AG04449 (cell line): ENCODE measurements at regions of chr13 and their contacts with region 1.

Region 1: DNA sequence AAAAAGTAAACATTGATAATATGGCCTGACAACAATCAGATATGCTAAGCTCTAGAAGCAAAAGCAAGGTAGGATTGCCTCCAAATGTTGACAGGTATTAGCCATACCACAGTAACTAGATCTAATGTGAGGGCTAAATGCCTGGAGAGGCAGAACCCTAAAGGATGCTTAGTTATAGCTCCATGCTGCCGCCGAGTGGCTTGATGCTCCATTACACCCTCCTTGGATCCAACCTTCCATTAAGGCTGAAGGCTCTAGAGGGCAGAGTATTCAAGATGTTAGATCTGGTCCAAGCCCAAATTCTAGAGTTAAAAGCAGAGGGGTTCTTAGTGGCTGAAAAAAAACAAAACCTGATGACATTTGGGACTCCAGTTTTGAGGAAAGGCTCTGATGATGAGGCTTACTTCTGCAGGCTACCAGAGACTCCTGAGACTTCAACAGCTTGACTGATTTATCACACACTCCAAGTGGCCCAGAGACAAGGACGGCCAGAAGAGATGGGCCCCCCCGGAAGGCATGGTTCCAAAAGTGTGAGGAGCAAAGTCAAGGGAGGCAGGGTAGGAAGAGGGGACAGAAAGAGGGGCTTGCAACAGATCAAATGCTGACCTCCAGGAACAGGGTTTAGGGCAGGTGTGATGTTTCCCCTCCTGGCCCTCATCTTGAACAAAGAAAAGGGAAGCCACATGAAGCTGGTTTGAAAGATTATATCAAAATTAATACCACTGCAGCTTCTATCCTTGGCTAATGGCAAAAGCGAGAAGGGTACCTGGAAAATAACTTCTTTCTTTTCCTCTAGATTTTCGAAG is 21.9 kb upstream of the CPB2 start:
- DNase-seq: peak; percentile 23
- H3K4me3 ChIP-seq: no peak overlapping the region
- CTCF ChIP-seq: peak; percentile 91

Region 2: GRCh38 chr13:45807520-45808099 is 319.1 kb before region 1 on chr13:
- CTCF ChIA-PET with region 1: interaction called, 76 read pairs
- POLR2A ChIA-PET with region 1: no interaction called
- DNase-seq: no peak
- H3K4me3 ChIP-seq: no peak overlapping the region
- CTCF ChIP-seq: peak; percentile 38

Region 3: DNA sequence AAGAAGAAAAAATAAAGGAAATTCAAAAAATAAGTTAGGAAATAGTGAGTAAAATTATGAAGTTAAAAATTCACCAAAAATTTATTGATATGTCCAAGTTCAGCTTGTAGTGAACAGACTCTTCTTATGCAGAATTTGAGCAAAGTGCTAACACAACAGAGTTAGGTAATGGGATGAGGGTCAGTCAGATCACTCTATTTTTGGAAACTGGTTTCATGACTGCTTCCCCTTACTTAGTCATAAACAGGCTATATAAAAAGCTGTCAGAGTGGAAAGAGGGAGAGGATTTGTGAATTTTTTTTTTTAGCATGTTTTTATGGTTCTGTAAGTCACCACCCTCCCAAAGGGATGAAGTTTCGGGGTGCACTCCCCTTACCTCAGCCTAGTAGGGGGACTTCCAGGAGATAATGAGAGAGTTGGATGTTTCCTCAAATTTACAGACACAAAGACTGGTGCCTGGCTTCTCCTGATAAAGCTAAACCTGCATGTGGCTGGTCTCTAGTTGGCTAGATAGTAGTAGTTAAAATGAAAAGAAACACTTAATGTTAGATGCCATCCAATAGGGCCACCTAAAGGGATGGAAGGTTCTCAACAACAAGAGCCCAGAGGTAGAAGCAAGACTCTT is 26.5 kb before region 1 on chr13:
- CTCF ChIA-PET with region 1: interaction called, 10 read pairs
- POLR2A ChIA-PET with region 1: no interaction called
- DNase-seq: no peak
- H3K4me3 ChIP-seq: no peak overlapping the region
- CTCF ChIP-seq: no peak

Region 4: GRCh38 chr13:46143184-46143701 is 16.5 kb after region 1 on chr13:
- CTCF ChIA-PET with region 1: interaction called, 29 read pairs
- POLR2A ChIA-PET with region 1: no interaction called
- DNase-seq: no peak
- H3K4me3 ChIP-seq: no peak overlapping the region
- CTCF ChIP-seq: no peak

Region 5: DNA sequence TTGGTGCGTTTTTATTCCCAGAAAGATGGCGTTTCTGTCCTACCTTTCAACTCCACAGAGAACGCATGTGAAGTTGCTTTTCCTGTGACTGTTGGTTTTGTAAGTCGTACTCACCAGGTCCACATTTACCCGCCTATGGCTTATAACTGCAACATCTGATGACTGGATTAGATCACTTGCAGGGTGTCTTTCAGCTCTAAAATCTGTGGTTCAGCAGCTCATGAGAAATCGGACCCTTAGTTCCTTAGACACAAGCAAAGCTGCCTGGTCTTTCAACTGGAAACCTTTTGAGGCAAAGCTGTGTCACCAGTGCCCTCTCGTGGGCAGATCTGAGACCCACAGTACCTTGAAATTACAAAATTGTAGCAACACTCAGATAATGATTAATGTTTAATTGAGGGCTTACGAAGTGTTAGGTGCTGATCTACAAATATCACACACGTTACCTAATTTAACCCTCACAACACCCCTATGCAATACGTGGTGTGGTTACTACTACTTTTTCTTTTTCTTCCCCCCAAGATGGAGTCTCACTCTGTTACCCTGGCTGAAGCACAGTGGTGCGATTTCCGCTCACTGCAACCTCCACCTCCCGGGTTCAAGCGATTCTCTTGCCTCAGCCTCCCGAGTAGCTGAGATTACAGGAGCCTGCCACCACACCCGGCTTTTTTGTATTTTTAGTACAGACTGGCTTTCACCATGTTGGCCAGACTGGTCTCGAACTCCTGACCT is 194.9 kb after region 1 on chr13:
- CTCF ChIA-PET with region 1: interaction called, 40 read pairs
- POLR2A ChIA-PET with region 1: no interaction called
- DNase-seq: no peak
- H3K4me3 ChIP-seq: no peak overlapping the region
- CTCF ChIP-seq: peak; percentile 72